MCF 10A (cell line): ENCODE measurements at regions of chr6 and their contacts with region 1.

Region 1: GRCh38 chr6:33585403-33586107 is 5.5 kb upstream of the BAK1 start:
- DNase-seq: peak; percentile 77
- H3K4me3 Mint-ChIP-seq: no peak overlapping the region
- H3K27ac Mint-ChIP-seq: no peak overlapping the region
- H3K4me1 Mint-ChIP-seq: peaks cover 8% of the 10 kb centered on the region
- H3K27me3 Mint-ChIP-seq: no peaks in the 10 kb centered on the region
- CTCF ChIP-seq: peak; percentile 97

Region 2: GRCh38 chr6:33235221-33235634 is 350.3 kb before region 1 on chr6:
- CTCF ChIA-PET with region 1: no interaction called
- POLR2A ChIA-PET with region 1: no interaction called
- intact Hi-C with region 1: no loop called
- DNase-seq: no peak
- H3K4me3 Mint-ChIP-seq: no peak overlapping the region
- H3K27ac Mint-ChIP-seq: no peak overlapping the region
- H3K4me1 Mint-ChIP-seq: no peaks in the 10 kb centered on the region
- H3K27me3 Mint-ChIP-seq: peaks cover 61% of the 10 kb centered on the region
- CTCF ChIP-seq: no peak

Region 3: GRCh38 chr6:33599413-33599911 is 13.9 kb after region 1 on chr6:
- CTCF ChIA-PET with region 1: interaction called, 13 read pairs
- POLR2A ChIA-PET with region 1: interaction called, 3 read pairs
- intact Hi-C with region 1: no loop called
- DNase-seq: peak; percentile 84
- H3K4me3 Mint-ChIP-seq: no peak overlapping the region
- H3K27ac Mint-ChIP-seq: peak overlapping the region; percentile 76
- H3K4me1 Mint-ChIP-seq: peaks cover 17% of the 10 kb centered on the region
- H3K27me3 Mint-ChIP-seq: no peaks in the 10 kb centered on the region
- CTCF ChIP-seq: no peak

Region 4: DNA sequence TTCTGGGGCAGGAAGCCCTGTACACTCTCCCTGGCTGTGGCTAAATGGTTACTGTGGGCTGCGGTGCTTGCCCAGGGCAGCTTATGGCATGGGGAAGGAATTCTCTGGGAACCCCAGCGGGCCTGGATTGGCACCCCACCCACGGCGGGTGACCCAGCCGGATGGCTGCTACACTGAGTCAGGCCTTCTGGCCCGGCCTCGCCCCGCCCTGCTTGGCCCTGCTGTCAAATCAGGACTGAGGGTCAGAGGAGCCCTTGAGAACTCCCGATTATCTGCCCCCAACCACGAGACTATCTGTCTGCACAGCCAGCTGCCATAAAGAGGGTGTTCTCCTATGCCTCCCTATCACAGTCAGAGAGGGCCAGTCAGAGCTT is 28.2 kb after region 1 on chr6:
- CTCF ChIA-PET with region 1: interaction called, 19 read pairs
- POLR2A ChIA-PET with region 1: interaction called, 3 read pairs
- intact Hi-C with region 1: no loop called
- DNase-seq: peak; percentile 47
- H3K4me3 Mint-ChIP-seq: no peak overlapping the region
- H3K27ac Mint-ChIP-seq: peak overlapping the region; percentile 2
- H3K4me1 Mint-ChIP-seq: peaks cover 34% of the 10 kb centered on the region
- H3K27me3 Mint-ChIP-seq: no peaks in the 10 kb centered on the region
- CTCF ChIP-seq: no peak

Region 5: GRCh38 chr6:33633462-33634158 is 48.1 kb after region 1 on chr6:
- CTCF ChIA-PET with region 1: interaction called, 13 read pairs
- POLR2A ChIA-PET with region 1: interaction called, 3 read pairs
- intact Hi-C with region 1: loop called (anchors 1 kb)
- DNase-seq: peak; percentile 73
- H3K4me3 Mint-ChIP-seq: peak overlapping the region; percentile 72
- H3K27ac Mint-ChIP-seq: no peak overlapping the region
- H3K4me1 Mint-ChIP-seq: peaks cover 50% of the 10 kb centered on the region
- H3K27me3 Mint-ChIP-seq: no peaks in the 10 kb centered on the region
- CTCF ChIP-seq: no peak

Region 6: DNA sequence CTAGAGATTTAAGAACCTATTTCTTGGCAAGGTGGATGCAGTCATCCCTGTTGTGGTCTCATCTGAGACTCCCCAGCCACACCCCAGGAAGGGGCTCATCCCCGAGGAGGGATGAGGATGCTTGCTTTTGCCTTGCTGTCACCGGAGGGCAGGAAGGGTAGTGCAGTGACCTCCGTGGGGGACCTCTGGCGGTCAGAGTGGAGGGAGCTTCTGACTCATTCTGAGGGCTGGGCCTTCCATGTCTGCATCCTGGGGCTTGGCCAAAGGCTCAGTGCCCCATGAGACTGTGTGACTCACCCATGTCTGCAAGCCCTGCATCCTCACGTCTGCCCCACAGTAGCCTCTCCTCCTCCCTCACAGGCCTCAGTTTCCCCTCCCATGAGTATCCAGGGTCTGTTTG is 87.3 kb after region 1 on chr6:
- CTCF ChIA-PET with region 1: interaction called, 30 read pairs
- POLR2A ChIA-PET with region 1: interaction called, 10 read pairs
- intact Hi-C with region 1: loop called (anchors 1 kb)
- DNase-seq: peak; percentile 96
- H3K4me3 Mint-ChIP-seq: no peak overlapping the region
- H3K27ac Mint-ChIP-seq: peak overlapping the region; percentile 83
- H3K4me1 Mint-ChIP-seq: peaks cover 10% of the 10 kb centered on the region
- H3K27me3 Mint-ChIP-seq: no peaks in the 10 kb centered on the region
- CTCF ChIP-seq: peak; percentile 57

Region 7: DNA sequence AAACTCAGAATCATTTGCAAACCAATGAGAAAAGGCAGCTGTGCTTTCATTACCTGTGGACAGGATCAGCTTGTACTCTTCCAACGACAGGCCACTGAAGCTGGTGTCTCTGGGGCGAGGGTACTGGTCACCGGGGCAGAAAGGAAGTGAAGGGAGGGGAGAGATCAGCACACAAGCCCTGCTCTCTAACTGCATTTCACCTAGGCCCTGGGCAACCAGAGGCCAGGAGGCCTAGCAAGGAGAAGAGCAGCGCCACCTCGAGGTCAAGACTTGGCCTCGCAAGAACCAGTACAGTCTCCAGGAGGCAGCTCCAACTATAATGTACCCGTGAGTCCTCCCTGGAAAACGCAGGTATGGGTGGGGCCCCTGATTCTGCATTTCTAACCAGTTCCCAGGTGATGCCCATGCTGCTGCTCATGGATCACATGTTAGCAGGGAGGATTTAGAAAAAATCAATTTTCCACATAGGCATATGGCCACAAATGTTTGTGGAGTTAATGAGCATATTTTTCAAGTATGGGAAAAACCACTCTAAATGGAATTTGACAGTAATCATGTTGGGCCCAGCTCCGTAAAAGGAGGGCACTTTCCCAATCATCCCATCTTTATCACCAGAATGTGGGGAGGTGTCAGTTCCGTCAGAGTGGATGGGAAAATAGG is 115.0 kb after region 1 on chr6:
- CTCF ChIA-PET with region 1: interaction called, 71 read pairs
- POLR2A ChIA-PET with region 1: interaction called, 6 read pairs
- intact Hi-C with region 1: loop called (anchors 1 kb)
- DNase-seq: peak; percentile 85
- H3K4me3 Mint-ChIP-seq: no peak overlapping the region
- H3K27ac Mint-ChIP-seq: no peak overlapping the region
- H3K4me1 Mint-ChIP-seq: peaks cover 19% of the 10 kb centered on the region
- H3K27me3 Mint-ChIP-seq: no peaks in the 10 kb centered on the region
- CTCF ChIP-seq: peak; percentile 69

Region 8: GRCh38 chr6:33761922-33762629 is 176.5 kb after region 1 on chr6:
- CTCF ChIA-PET with region 1: interaction called, 16 read pairs
- POLR2A ChIA-PET with region 1: interaction called, 3 read pairs
- intact Hi-C with region 1: loop called (anchors 1 kb)
- DNase-seq: peak; percentile 75
- H3K4me3 Mint-ChIP-seq: no peak overlapping the region
- H3K27ac Mint-ChIP-seq: no peak overlapping the region
- H3K4me1 Mint-ChIP-seq: peaks cover 15% of the 10 kb centered on the region
- H3K27me3 Mint-ChIP-seq: no peaks in the 10 kb centered on the region
- CTCF ChIP-seq: peak; percentile 80